ENCODE measurements at regions of chr11 and their contacts with region 1.

Region 1: GRCh38 chr11:112289588-112290492 is 29.2 kb upstream of the PLET1 start:
- DNase-seq: peak; percentile 62 to 98 (median 82)
- ATAC-seq: peak; percentile 99
- H3K4me3 ChIP-seq: peak overlapping the region; percentile 42 to 51
- H3K27ac ChIP-seq: no peak overlapping the region
- H3K4me1 ChIP-seq: peaks cover 0 to 22% of the 10 kb centered on the region in 2 donors
- H3K27me3 ChIP-seq: no peaks in the 10 kb centered on the region
- CTCF ChIP-seq: peak; percentile 83 to 90

Region 2: DNA sequence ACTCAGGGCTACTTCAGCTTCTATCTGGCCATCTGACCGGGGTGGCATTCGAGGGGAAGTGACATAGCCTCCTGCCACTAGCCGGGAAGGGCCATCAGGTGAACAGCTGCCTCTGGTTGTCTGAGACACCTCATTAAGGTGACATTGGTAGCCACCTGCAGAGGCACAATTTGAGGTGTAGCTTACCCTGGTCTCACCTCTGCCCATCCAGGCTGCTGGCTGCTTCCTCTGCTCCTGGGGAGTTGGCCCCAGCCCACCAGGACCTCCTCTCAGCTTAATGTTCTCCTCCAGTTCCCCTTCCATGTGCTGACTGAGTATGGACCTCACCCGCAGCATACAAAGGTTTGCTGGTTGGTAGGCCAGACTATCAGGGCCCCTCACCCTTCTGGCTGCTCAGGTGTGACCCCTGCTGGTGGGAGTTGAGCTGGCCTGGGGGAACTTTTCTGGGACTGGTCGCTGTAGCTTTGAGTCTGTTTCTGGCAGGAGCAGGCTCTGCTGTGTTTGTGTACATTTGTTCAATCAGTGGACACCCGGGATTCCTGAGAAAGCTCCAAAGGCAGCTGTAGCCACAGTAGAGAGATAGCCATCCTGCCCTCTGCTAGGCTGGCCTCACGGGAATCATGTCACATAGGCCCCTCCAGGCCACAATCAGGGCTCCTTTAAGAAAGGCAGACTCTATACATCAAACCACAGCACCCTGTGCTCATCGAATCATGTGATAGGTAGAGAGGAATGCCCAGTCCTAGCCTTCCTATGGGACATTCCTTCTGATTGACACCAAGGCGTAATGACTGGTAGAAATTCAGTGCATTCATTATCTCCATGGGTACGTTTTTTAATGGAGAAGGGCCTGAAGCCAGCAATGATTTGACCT is 265.9 kb after region 1 on chr11:
- intact Hi-C with region 1: loop called in 1 of 2 experiments (anchors 10 kb)
- DNase-seq: peak in 3 of 4 donors; percentile 44 to 82 (median 58)
- ATAC-seq: peak; percentile 97
- H3K4me3 ChIP-seq: no peak overlapping the region
- H3K27ac ChIP-seq: no peak overlapping the region
- H3K4me1 ChIP-seq: no peaks in the 10 kb centered on the region
- H3K27me3 ChIP-seq: peaks cover 0 to 3% of the 10 kb centered on the region in 2 donors
- CTCF ChIP-seq: peak; percentile 55 to 64